Panc1 (cell line): ENCODE measurements at regions of chr10 and their contacts with region 1.

Region 1: GRCh38 chr10:81135851-81136250 is 598.1 kb downstream of the SH2D4B start:
- DNase-seq: no peak
- ATAC-seq: no peak
- H3K4me3 ChIP-seq: no peak overlapping the region
- H3K27ac ChIP-seq: no peak overlapping the region
- H3K4me1 ChIP-seq: no peaks in the 10 kb centered on the region
- H3K27me3 ChIP-seq: no peaks in the 10 kb centered on the region
- CTCF ChIP-seq: no peak

Region 2: GRCh38 chr10:81116989-81117388 is 18.9 kb before region 1 on chr10:
- CTCF ChIA-PET with region 1: no interaction called
- POLR2A ChIA-PET with region 1: no interaction called
- in situ Hi-C with region 1: no loop called
- intact Hi-C with region 1: loop called (anchors 1 kb)
- DNase-seq: no peak
- ATAC-seq: no peak
- H3K4me3 ChIP-seq: no peak overlapping the region
- H3K27ac ChIP-seq: no peak overlapping the region
- H3K4me1 ChIP-seq: no peaks in the 10 kb centered on the region
- H3K27me3 ChIP-seq: no peaks in the 10 kb centered on the region
- CTCF ChIP-seq: peak; percentile 22; the same call in 1 of the 2 replicates